ENCODE measurements at regions of chr12 and their contacts with region 1.

Region 1: GRCh38 chr12:64256166-64256800 is 34.2 kb upstream of the KICS2 start:
- DNase-seq: peak in 3 of 9 experiments; percentile 9 to 68 (median 59)
- ATAC-seq: no peak
- H3K4me3 ChIP-seq: no peak overlapping the region
- H3K4me3 Mint-ChIP-seq: no peak overlapping the region
- H3K27ac ChIP-seq: no peak overlapping the region
- H3K27ac Mint-ChIP-seq: no peak overlapping the region
- H3K4me1 ChIP-seq: no peaks in the 10 kb centered on the region
- H3K4me1 Mint-ChIP-seq: no peaks in the 10 kb centered on the region
- H3K27me3 ChIP-seq: no peaks in the 10 kb centered on the region
- H3K27me3 Mint-ChIP-seq: peaks cover 2% of the 10 kb centered on the region
- CTCF ChIP-seq: peak; percentile 81

Region 2: DNA sequence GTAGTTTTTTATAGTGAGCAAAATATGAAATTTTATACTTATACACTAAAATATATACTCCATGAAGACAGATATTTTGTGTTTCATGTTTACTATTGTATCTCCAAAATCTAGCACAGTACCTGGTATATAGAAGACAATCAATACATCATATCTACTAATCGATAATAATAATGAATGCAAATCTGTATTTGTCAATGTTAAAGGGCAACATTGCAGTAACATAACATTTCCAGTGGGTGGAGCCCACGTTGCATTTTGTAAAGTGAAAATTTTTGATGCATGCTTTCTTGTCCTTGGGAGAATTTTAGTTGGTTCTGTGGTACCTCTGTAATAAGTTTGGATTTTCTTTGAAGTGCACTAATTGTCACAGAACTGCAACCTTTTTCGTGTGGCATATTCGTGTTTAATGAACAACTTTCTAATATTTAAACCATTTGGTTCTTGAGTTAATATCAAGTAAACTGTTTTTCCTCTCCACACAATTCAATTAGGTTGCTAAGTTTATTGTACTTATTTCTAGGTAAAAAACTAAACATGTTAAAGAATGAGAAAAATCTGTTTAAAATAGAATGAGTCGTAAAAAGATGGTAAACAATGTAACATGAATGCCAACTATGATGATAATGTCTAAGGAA is 1152.7 kb before region 1 on chr12:
- CTCF ChIA-PET with region 1: interaction called, 3 read pairs
- POLR2A ChIA-PET with region 1: no interaction called
- intact Hi-C with region 1: loop called in 1 of 2 experiments (anchors 1 kb)
- DNase-seq: peak in 2 of 9 experiments; percentile 22 to 33
- ATAC-seq: no peak
- H3K4me3 ChIP-seq: no peak overlapping the region
- H3K4me3 Mint-ChIP-seq: no peak overlapping the region
- H3K27ac ChIP-seq: no peak overlapping the region
- H3K27ac Mint-ChIP-seq: no peak overlapping the region
- H3K4me1 ChIP-seq: no peaks in the 10 kb centered on the region
- H3K4me1 Mint-ChIP-seq: no peaks in the 10 kb centered on the region
- H3K27me3 ChIP-seq: no peaks in the 10 kb centered on the region
- H3K27me3 Mint-ChIP-seq: no peaks in the 10 kb centered on the region
- CTCF ChIP-seq: peak; percentile 80

Region 3: GRCh38 chr12:63420206-63420644 is 836.1 kb before region 1 on chr12:
- CTCF ChIA-PET with region 1: no interaction called
- POLR2A ChIA-PET with region 1: no interaction called
- intact Hi-C with region 1: loop called (anchors 5 kb)
- DNase-seq: peak in 4 of 9 experiments; percentile 8 to 48 (median 24)
- ATAC-seq: no peak
- H3K4me3 ChIP-seq: no peak overlapping the region
- H3K4me3 Mint-ChIP-seq: no peak overlapping the region
- H3K27ac ChIP-seq: no peak overlapping the region
- H3K27ac Mint-ChIP-seq: no peak overlapping the region
- H3K4me1 ChIP-seq: no peaks in the 10 kb centered on the region
- H3K4me1 Mint-ChIP-seq: no peaks in the 10 kb centered on the region
- H3K27me3 ChIP-seq: no peaks in the 10 kb centered on the region
- H3K27me3 Mint-ChIP-seq: no peaks in the 10 kb centered on the region
- CTCF ChIP-seq: peak; percentile 32

Region 4: DNA sequence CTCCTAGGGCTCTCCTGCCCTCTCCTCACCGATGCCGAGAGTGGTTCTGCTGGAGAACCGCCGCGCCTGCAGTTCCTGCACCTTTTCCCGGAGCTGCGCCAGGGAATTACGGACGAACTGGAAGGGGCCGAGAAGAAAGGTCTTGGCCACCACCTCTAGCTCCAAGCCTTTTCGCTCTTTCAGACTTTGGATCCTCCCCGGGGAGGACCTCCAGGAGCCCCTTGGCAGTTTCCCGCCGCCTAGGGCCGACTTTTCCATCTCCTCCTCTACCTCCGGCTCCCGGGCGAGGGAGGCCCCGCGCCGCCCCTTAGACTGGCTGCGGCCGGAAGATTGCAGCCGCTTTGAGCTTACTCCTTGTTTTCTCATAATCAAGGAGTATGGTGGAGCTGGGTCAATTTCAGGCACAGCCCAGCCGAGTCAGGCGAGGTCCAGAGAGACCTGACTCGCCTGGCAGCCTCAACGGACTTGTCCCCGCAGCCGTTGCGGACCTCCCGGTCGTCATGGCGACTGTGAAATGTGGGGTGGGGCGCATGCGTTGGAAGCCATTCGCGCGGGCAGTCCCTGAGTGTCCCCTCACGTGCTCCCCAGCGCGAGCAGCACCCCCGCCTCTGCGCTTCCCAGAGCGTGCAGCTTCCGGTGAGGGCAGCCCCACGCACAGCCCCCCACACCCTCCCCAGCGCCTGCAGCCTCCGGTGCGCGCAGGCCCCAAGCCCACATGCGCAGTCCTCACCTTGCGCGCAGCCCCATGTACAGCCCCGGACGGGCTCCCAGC is 588.1 kb before region 1 on chr12 and contains the start of gene DPY19L2:
- CTCF ChIA-PET with region 1: interaction called, 3 read pairs
- POLR2A ChIA-PET with region 1: no interaction called
- intact Hi-C with region 1: loop called (anchors 1 to 2 kb)
- DNase-seq: peak; percentile 21 to 88 (median 56)
- ATAC-seq: peak; percentile 90
- H3K4me3 ChIP-seq: peak within 1 kb of the TSS; percentile 68 to 73
- H3K4me3 Mint-ChIP-seq: peak within 1 kb of the TSS; percentile 95
- H3K27ac ChIP-seq: peak within 1 kb of the TSS; percentile 51 to 83
- H3K27ac Mint-ChIP-seq: peak within 1 kb of the TSS; percentile 72
- H3K4me1 ChIP-seq: peaks cover 7% of the 10 kb centered on the region
- H3K4me1 Mint-ChIP-seq: peaks cover 36% of the 10 kb centered on the region
- H3K27me3 ChIP-seq: no peaks in the 10 kb centered on the region
- H3K27me3 Mint-ChIP-seq: no peaks in the 10 kb centered on the region
- CTCF ChIP-seq: no peak
- total RNA-seq, gene DPY19L2: 3.4 to 3.6 TPM

Region 5: GRCh38 chr12:63843721-63844390 is 412.4 kb before region 1 on chr12:
- CTCF ChIA-PET with region 1: interaction called, 25 read pairs
- POLR2A ChIA-PET with region 1: no interaction called
- intact Hi-C with region 1: loop called (anchors 1 kb)
- DNase-seq: peak; percentile 61 to 91 (median 78)
- ATAC-seq: peak; percentile 94
- H3K4me3 ChIP-seq: peak overlapping the region; percentile 49 to 69
- H3K4me3 Mint-ChIP-seq: peak overlapping the region; percentile 76
- H3K27ac ChIP-seq: no peak overlapping the region
- H3K27ac Mint-ChIP-seq: no peak overlapping the region
- H3K4me1 ChIP-seq: peaks cover 7% of the 10 kb centered on the region
- H3K4me1 Mint-ChIP-seq: peaks cover 10% of the 10 kb centered on the region
- H3K27me3 ChIP-seq: peaks cover 0 to 13% of the 10 kb centered on the region in 2 experiments
- H3K27me3 Mint-ChIP-seq: peaks cover 32% of the 10 kb centered on the region
- CTCF ChIP-seq: peak; percentile 78

Region 6: GRCh38 chr12:64311877-64312276 is 55.6 kb after region 1 on chr12:
- CTCF ChIA-PET with region 1: no interaction called
- POLR2A ChIA-PET with region 1: no interaction called
- intact Hi-C with region 1: no loop called
- DNase-seq: no peak
- ATAC-seq: no peak
- H3K4me3 ChIP-seq: no peak overlapping the region
- H3K4me3 Mint-ChIP-seq: no peak overlapping the region
- H3K27ac ChIP-seq: no peak overlapping the region
- H3K27ac Mint-ChIP-seq: no peak overlapping the region
- H3K4me1 ChIP-seq: no peaks in the 10 kb centered on the region
- H3K4me1 Mint-ChIP-seq: no peaks in the 10 kb centered on the region
- H3K27me3 ChIP-seq: no peaks in the 10 kb centered on the region
- H3K27me3 Mint-ChIP-seq: peaks cover 4% of the 10 kb centered on the region
- CTCF ChIP-seq: no peak

Measured in CD8-positive, alpha-beta T cell (primary cell).